ENCODE measurements at regions of chr15 and their contacts with region 1.

Region 1: GRCh38 chr15:52679232-52680040 is at the start of gene ATOSA:
- DNase-seq: peak; percentile 48
- ATAC-seq: peak; percentile 84
- H3K4me3 ChIP-seq: peak within 1 kb of the TSS; percentile 93
- H3K27ac ChIP-seq: peak within 1 kb of the TSS; percentile 84
- H3K4me1 ChIP-seq: peaks cover 43% of the 10 kb centered on the region
- H3K27me3 ChIP-seq: no peaks in the 10 kb centered on the region
- CTCF ChIP-seq: no peak
- EP300 ChIP-seq: no peak
- POLR2A ChIP-seq: peak; percentile 74
- RAD21 ChIP-seq: no peak
- polyA plus RNA-seq, gene ATOSA: 6.8 to 7.9 TPM

Region 2: GRCh38 chr15:52438047-52438446 is 241.4 kb before region 1 on chr15:
- CTCF ChIA-PET with region 1: no interaction called
- POLR2A ChIA-PET with region 1: no interaction called
- RAD21 ChIA-PET with region 1: no interaction called
- SMC1A ChIA-PET with region 1: no interaction called
- in situ Hi-C with region 1: no loop called
- intact Hi-C with region 1: no loop called
- DNase-seq: peak; percentile 3
- ATAC-seq: peak; percentile 48
- H3K4me3 ChIP-seq: no peak overlapping the region
- H3K27ac ChIP-seq: peak overlapping the region; percentile 63
- H3K4me1 ChIP-seq: peaks cover 12% of the 10 kb centered on the region
- H3K27me3 ChIP-seq: no peaks in the 10 kb centered on the region
- CTCF ChIP-seq: no peak
- EP300 ChIP-seq: no peak
- POLR2A ChIP-seq: no peak
- RAD21 ChIP-seq: no peak

Region 3: GRCh38 chr15:52584414-52584813 is 95.0 kb before region 1 on chr15:
- CTCF ChIA-PET with region 1: no interaction called
- POLR2A ChIA-PET with region 1: no interaction called
- RAD21 ChIA-PET with region 1: no interaction called
- SMC1A ChIA-PET with region 1: no interaction called
- in situ Hi-C with region 1: no loop called
- intact Hi-C with region 1: no loop called
- DNase-seq: no peak
- ATAC-seq: no peak
- H3K4me3 ChIP-seq: no peak overlapping the region
- H3K27ac ChIP-seq: no peak overlapping the region
- H3K4me1 ChIP-seq: no peaks in the 10 kb centered on the region
- H3K27me3 ChIP-seq: no peaks in the 10 kb centered on the region
- CTCF ChIP-seq: no peak
- EP300 ChIP-seq: no peak
- POLR2A ChIP-seq: no peak
- RAD21 ChIP-seq: no peak

Region 4: GRCh38 chr15:52667597-52667996 is 11.8 kb before region 1 on chr15:
- CTCF ChIA-PET with region 1: interaction called, 4 read pairs
- POLR2A ChIA-PET with region 1: no interaction called
- RAD21 ChIA-PET with region 1: interaction called, 4 read pairs
- SMC1A ChIA-PET with region 1: interaction called, 13 read pairs
- in situ Hi-C with region 1: no loop called
- intact Hi-C with region 1: no loop called
- DNase-seq: no peak
- ATAC-seq: peak; percentile 90
- H3K4me3 ChIP-seq: no peak overlapping the region
- H3K27ac ChIP-seq: no peak overlapping the region
- H3K4me1 ChIP-seq: peaks cover 11% of the 10 kb centered on the region; the same call in 1 of the 2 replicates
- H3K27me3 ChIP-seq: no peaks in the 10 kb centered on the region
- CTCF ChIP-seq: no peak
- EP300 ChIP-seq: peak in 1 of 2 experiments; percentile 40; a peak in 1 of 4 replicates
- POLR2A ChIP-seq: no peak
- RAD21 ChIP-seq: no peak

Region 5: GRCh38 chr15:52730173-52730572 is 50.7 kb after region 1 on chr15:
- CTCF ChIA-PET with region 1: interaction called, 5 read pairs
- POLR2A ChIA-PET with region 1: no interaction called
- RAD21 ChIA-PET with region 1: interaction called, 10 read pairs
- SMC1A ChIA-PET with region 1: interaction called, 8 read pairs
- in situ Hi-C with region 1: no loop called
- intact Hi-C with region 1: loop called (anchors 5 kb)
- DNase-seq: peak; percentile 28
- ATAC-seq: peak; percentile 80
- H3K4me3 ChIP-seq: no peak overlapping the region; the same call in 1 of the 2 replicates
- H3K27ac ChIP-seq: no peak overlapping the region
- H3K4me1 ChIP-seq: peaks cover 9% of the 10 kb centered on the region; the same call in 1 of the 2 replicates
- H3K27me3 ChIP-seq: no peaks in the 10 kb centered on the region
- CTCF ChIP-seq: 0 out of 6 replicates have a peak, but pooled peaks of 1 of the 3 experiments have one; percentile 6
- EP300 ChIP-seq: no peak
- POLR2A ChIP-seq: no peak
- RAD21 ChIP-seq: peak; percentile 36; the same call in 1 of the 2 replicates

Measured in GM12878 (cell line).